K562 (cell line): ENCODE measurements at regions of chr10 and their contacts with region 1.

Region 1: GRCh38 chr10:91908337-91909116 is 759 bp downstream of the FGFBP3 start:
- DNase-seq: peak; percentile 65 to 89 (median 74)
- ATAC-seq: peak; percentile 98
- H3K4me3 ChIP-seq: peak overlapping the region; percentile 74
- H3K27ac ChIP-seq: peak overlapping the region; percentile 50; the same call in 1 of the 3 replicates
- H3K4me1 ChIP-seq: peaks cover 0 to 10% of the 10 kb centered on the region in 2 experiments; a peak in 2 of 5 replicates
- H3K27me3 ChIP-seq: no peaks in the 10 kb centered on the region
- CTCF ChIP-seq: peak; percentile 68 to 90 (median 69)
- EP300 ChIP-seq: no peak
- POLR2A ChIP-seq: peak; percentile 67; the same call in 1 of the 2 replicates
- RAD21 ChIP-seq: peak; percentile 25 to 62; a peak in 3 of 4 replicates

Region 2: DNA sequence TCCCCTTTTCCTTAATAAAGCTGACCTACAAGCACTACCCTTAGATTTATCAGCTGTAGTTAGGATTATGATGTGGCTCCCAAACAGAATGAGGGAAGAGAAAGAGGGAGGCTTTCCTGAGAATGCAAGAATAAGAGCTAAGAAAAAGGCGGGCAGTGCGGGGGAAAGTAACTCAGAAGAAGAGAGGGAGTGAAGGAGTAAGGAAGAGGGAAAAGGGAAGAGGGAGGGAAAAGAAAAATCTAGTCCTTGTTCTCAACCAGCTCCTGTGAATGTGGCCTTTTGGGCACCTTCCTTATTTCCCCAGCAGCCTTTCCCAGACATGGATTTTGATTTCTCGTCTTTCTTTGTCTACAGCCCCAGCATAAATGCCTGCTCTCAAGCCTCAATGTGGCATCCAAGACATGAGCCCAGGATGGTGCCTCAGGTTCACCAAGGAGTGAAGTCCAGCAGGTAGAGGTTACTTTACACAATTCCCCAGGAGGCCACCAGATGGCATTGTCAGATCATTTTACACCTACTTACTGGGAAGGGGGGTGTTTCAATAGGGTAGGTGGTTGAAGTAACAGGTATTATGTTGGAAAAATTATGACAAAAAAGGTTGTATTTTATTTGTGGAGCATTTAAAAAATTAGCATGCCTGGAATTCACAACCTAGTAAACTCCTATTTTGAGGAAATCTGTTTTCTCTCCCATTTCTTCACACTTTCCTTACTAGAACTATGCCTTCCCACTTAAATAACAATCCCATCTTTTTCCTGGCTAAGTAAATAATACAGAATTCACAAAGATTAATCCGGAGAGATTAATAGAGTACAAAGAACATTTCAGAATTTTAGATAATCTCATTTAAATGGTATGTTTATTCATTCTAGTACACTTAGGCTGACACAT is 1157.2 kb before region 1 on chr10:
- CTCF ChIA-PET with region 1: no interaction called
- POLR2A ChIA-PET with region 1: no interaction called
- in situ Hi-C with region 1: no loop called
- intact Hi-C with region 1: loop called (anchors 5 kb)
- DNase-seq: peak; percentile 32 to 58 (median 38)
- ATAC-seq: peak; percentile 86
- H3K4me3 ChIP-seq: no peak overlapping the region
- H3K27ac ChIP-seq: no peak overlapping the region
- H3K4me1 ChIP-seq: no peaks in the 10 kb centered on the region
- H3K27me3 ChIP-seq: no peaks in the 10 kb centered on the region
- CTCF ChIP-seq: peak; percentile 44 to 65 (median 57); a peak in 5 of 6 replicates
- EP300 ChIP-seq: no peak
- POLR2A ChIP-seq: no peak
- RAD21 ChIP-seq: peak; percentile 54 to 68

Region 3: DNA sequence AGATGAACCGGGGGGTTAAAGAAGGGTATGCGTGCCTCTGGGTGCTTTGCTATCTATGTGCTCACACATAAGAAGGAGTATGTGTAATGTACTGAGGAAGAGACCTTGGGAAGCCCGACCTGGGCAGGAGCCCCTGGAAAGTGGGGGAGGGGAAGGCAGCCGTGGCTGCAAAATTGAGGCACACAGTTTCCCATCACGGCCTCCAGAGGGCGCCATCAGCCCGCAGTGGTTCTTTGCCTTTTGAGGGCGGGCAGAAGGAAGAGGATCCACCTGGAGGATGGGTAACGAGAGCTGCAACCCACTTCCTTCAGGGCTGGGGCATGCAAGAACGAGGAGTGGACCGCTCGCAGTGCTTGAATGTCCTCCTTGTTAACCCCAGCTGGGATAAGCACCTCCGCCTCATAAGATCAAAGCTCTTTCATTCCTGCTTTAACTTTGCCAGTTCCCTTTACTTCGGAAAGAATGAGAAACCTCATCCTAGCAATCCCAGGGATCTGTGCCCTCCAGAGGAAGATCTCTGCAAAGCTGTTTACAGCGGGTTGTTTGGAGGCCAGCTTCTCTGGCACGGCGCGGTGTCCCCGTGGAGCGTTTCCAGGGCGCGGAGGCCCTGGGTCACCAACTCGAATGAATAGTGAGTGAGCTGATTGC is 610.2 kb before region 1 on chr10:
- CTCF ChIA-PET with region 1: interaction called, 3 read pairs
- POLR2A ChIA-PET with region 1: no interaction called
- in situ Hi-C with region 1: loop called (anchors 25 kb)
- intact Hi-C with region 1: loop called (anchors 5 kb)
- DNase-seq: peak; percentile 66 to 78 (median 74)
- ATAC-seq: peak; percentile 91
- H3K4me3 ChIP-seq: no peak overlapping the region
- H3K27ac ChIP-seq: no peak overlapping the region
- H3K4me1 ChIP-seq: peaks cover 0 to 3% of the 10 kb centered on the region in 2 experiments; a peak in 1 of 5 replicates
- H3K27me3 ChIP-seq: no peaks in the 10 kb centered on the region
- CTCF ChIP-seq: peak; percentile 81 to 88 (median 88)
- EP300 ChIP-seq: no peak
- POLR2A ChIP-seq: no peak
- RAD21 ChIP-seq: peak; percentile 89 to 91

Region 4: DNA sequence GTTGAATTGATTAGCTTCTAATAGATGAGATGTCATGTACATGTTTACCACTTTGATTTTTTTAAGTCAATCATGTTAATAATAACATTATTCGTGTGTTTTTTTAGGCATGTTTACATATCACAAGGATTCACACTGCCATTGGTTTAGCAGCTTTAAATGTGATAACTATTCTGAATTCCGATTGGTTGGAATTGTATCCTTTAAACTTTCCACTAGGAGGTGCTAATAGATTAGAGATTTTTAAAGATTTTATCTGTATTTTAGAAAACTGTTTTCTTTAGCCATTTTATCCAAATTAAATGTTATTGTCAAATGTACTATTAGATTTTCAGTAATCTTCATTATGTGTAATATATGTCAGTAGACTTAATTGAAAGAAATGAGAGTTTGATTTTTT is 415.2 kb before region 1 on chr10:
- CTCF ChIA-PET with region 1: interaction called, 4 read pairs
- POLR2A ChIA-PET with region 1: no interaction called
- in situ Hi-C with region 1: no loop called
- intact Hi-C with region 1: loop called (anchors 2 kb)
- DNase-seq: peak in 2 of 4 experiments; percentile 3 to 27
- ATAC-seq: no peak
- H3K4me3 ChIP-seq: no peak overlapping the region
- H3K27ac ChIP-seq: no peak overlapping the region
- H3K4me1 ChIP-seq: no peaks in the 10 kb centered on the region
- H3K27me3 ChIP-seq: no peaks in the 10 kb centered on the region
- CTCF ChIP-seq: peak in 1 of 3 experiments; percentile 41; a peak in 3 of 6 replicates
- EP300 ChIP-seq: no peak
- POLR2A ChIP-seq: no peak
- RAD21 ChIP-seq: peak; percentile 53 to 58

Region 5: DNA sequence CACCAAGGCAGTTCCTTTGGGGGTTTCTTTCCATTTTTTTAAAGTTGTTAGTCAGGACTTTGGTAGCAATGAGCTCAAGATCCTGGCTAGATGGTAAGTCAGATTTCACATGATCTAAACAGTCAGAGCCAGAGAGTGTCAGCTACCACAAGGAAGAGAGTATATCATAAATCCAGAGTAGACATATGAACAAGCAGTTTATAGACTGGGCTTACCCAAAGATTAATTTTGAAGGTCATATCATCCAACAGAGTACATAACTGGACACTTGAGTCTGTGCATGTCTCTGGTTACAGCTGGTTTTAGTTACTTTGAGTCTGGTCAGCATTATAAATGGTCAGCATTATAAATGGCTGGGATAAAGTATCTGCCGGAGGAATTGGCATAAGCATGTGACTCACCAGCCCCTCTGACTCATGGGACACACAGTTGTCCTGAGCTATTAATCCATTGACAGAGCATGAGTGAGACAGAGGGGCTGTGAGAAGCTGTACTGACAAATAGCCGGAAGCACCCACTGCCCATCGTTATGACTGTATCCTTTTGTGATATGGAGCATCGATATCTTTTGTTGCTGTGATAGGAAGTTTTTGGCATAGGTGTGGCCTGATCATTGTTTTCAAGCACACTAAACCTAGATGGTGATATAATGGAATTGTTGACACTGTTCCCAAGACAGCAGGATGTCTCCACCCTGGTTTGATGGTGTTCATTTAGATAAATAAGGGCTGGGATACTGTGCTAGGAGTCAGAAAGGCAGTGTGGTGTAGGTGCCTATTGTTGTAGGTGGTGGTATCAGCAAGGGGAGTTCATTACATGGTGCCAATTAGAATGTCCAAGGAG is 294.9 kb before region 1 on chr10:
- CTCF ChIA-PET with region 1: no interaction called
- POLR2A ChIA-PET with region 1: no interaction called
- in situ Hi-C with region 1: no loop called
- intact Hi-C with region 1: no loop called
- DNase-seq: peak in 2 of 4 experiments; percentile 39 to 54
- ATAC-seq: peak; percentile 8; the same call in 1 of the 3 replicates
- H3K4me3 ChIP-seq: no peak overlapping the region
- H3K27ac ChIP-seq: peak overlapping the region; percentile 67; the same call in 2 of the 3 replicates
- H3K4me1 ChIP-seq: peaks cover 10 to 45% of the 10 kb centered on the region in 2 experiments; a peak in 3 of 5 replicates
- H3K27me3 ChIP-seq: no peaks in the 10 kb centered on the region
- CTCF ChIP-seq: no peak
- EP300 ChIP-seq: no peak
- POLR2A ChIP-seq: no peak
- RAD21 ChIP-seq: no peak

Region 6: DNA sequence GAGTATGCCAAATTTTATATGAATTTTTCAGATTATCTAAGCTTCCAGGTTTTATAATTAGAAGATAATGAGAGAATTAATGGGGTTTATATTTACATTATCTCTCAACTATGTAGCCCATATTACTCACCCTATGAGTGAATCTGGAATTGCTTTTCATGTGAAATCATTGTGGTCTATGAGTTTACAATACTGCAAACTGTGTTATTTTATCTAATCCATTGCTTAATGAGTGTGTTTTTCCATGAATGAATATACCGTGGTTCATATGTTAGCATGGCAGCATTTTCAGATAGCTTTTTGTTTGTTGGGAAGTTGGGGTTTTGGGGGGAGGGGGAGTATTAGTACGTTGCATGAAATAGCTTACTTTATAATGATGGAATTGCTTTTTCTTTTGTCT is 43.8 kb before region 1 on chr10:
- CTCF ChIA-PET with region 1: no interaction called
- POLR2A ChIA-PET with region 1: no interaction called
- in situ Hi-C with region 1: no loop called
- intact Hi-C with region 1: loop called (anchors 5 kb)
- DNase-seq: no peak
- ATAC-seq: no peak
- H3K4me3 ChIP-seq: no peak overlapping the region
- H3K27ac ChIP-seq: no peak overlapping the region
- H3K4me1 ChIP-seq: no peaks in the 10 kb centered on the region
- H3K27me3 ChIP-seq: no peaks in the 10 kb centered on the region
- CTCF ChIP-seq: no peak
- EP300 ChIP-seq: no peak
- POLR2A ChIP-seq: no peak
- RAD21 ChIP-seq: no peak